Calu3 (cell line): ENCODE measurements at regions of chr4 and their contacts with region 1.

Region 1: GRCh38 chr4:181528570-181529184 is 714.5 kb upstream of the TENM3 start:
- DNase-seq: peak; percentile 79
- H3K4me3 Mint-ChIP-seq: no peak overlapping the region
- H3K27ac Mint-ChIP-seq: no peak overlapping the region
- H3K4me1 Mint-ChIP-seq: no peaks in the 10 kb centered on the region
- H3K27me3 Mint-ChIP-seq: no peaks in the 10 kb centered on the region
- CTCF ChIP-seq: peak; percentile 67

Region 2: DNA sequence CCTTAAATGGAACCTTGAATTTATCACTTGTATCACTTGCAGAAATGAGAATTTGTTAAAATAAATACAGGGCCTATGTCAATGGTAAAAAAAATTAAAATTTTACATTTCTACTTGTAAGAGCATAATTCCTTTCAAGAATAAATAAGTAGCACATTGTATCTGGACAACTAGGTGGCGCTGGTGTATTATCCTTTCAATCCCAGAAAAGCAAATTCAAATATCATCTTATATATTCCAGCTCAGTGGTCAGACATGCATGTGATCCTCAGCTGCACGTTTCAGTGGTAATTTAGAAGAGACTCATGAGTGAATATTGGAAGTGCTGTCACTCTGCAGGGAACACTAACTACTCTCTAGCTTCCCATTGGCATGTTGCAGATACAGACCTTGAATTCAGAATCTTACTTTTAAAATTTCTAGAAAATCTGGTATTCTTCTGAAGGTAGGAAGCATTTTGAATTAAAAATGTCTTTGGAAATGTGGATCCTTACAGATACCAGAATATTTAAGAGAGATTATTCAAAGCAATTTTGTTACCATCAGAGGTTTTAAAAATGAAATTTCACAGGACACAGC is 700.1 kb before region 1 on chr4:
- CTCF ChIA-PET with region 1: no interaction called
- intact Hi-C with region 1: loop called (anchors 2 kb)
- DNase-seq: peak; percentile 21
- H3K4me3 Mint-ChIP-seq: no peak overlapping the region
- H3K27ac Mint-ChIP-seq: no peak overlapping the region
- H3K4me1 Mint-ChIP-seq: no peaks in the 10 kb centered on the region
- H3K27me3 Mint-ChIP-seq: no peaks in the 10 kb centered on the region
- CTCF ChIP-seq: peak; percentile 41

Region 3: DNA sequence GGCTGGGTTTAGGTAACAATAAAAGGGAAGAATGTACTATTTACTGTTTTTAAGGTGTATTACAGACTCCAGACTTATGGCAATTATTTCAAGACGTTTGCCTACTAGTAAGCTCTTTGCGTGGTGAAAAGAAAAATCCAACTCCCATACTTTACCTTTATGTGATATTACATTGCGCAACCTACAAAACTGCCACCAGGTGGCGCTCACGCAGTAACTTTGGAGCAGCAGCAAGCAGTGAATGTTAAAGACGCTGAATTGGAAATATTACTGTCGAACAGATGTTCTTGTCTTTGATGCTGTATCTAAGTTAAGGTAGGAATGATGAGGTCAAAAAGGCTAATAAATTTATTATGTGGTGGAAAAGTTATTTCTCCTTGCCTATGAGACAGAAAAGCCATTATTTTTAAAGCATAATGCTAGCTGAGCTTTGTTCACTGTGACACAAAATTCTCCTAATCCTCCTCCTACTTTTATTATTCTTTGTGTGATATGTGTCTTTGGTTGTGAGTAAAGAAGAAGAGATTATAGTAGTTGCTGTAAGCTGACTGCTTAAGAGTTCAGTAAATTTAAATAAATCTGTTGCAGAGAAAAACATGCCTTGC is 385.3 kb before region 1 on chr4:
- CTCF ChIA-PET with region 1: interaction called, 12 read pairs
- intact Hi-C with region 1: loop called (anchors 1 kb)
- DNase-seq: peak; percentile 68
- H3K4me3 Mint-ChIP-seq: no peak overlapping the region
- H3K27ac Mint-ChIP-seq: no peak overlapping the region
- H3K4me1 Mint-ChIP-seq: no peaks in the 10 kb centered on the region
- H3K27me3 Mint-ChIP-seq: no peaks in the 10 kb centered on the region
- CTCF ChIP-seq: peak; percentile 50

Region 4: GRCh38 chr4:181261279-181261678 is 267.4 kb before region 1 on chr4:
- CTCF ChIA-PET with region 1: interaction called, 8 read pairs
- intact Hi-C with region 1: loop called (anchors 5 kb)
- DNase-seq: peak; percentile 3
- H3K4me3 Mint-ChIP-seq: no peak overlapping the region
- H3K27ac Mint-ChIP-seq: no peak overlapping the region
- H3K4me1 Mint-ChIP-seq: no peaks in the 10 kb centered on the region
- H3K27me3 Mint-ChIP-seq: no peaks in the 10 kb centered on the region
- CTCF ChIP-seq: no peak

Region 5: DNA sequence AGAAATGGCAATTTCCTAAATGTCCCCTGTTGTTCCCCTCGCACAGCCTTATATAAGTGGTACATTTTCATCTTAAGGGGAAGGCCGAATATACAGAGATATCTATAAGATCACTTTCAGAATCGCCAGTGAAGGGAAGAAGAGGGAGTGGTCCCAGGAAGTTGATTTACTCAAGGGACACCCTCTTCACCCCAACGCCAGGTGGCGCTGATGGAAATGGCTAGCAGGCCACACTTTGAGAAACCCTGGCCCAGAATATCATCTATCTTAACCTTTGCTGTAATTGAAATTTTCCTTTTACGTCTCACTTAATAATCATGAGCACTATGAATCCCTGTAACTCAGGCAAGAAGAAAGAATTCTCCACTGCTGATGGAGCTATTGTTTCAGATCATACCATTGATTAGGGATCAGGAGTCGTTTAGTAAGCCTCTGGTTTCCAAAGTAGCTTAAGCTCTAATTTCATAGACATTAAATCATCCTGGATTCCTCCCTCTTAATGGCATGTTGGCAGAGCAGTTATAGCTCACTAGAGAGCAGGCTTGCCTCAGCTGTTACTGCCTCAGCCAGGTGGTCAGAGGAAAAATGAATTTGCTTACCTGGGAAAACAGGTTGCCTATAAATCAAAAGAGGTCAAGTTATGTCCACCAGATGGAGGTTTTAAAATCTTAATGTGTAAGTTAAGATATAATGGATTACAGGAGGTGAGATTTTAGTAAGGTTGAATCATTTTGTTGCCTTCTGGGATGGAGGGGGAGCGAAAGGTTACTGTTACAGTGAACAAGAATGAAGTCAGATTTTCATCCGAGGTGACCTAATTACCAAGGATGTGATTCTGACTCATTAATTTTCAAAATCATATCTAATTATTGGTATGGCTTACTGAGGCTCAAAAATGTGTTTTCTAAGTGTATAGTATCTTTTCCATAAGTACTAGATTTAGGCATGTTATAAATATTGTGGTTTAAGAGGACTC is 226.7 kb before region 1 on chr4:
- CTCF ChIA-PET with region 1: interaction called, 16 read pairs
- intact Hi-C with region 1: loop called (anchors 1 kb)
- DNase-seq: peak; percentile 69
- H3K4me3 Mint-ChIP-seq: peak overlapping the region; percentile 56
- H3K27ac Mint-ChIP-seq: no peak overlapping the region
- H3K4me1 Mint-ChIP-seq: peaks cover 7% of the 10 kb centered on the region
- H3K27me3 Mint-ChIP-seq: no peaks in the 10 kb centered on the region
- CTCF ChIP-seq: peak; percentile 43